ENCODE measurements at regions of chr20 and their contacts with region 1.

Region 1: DNA sequence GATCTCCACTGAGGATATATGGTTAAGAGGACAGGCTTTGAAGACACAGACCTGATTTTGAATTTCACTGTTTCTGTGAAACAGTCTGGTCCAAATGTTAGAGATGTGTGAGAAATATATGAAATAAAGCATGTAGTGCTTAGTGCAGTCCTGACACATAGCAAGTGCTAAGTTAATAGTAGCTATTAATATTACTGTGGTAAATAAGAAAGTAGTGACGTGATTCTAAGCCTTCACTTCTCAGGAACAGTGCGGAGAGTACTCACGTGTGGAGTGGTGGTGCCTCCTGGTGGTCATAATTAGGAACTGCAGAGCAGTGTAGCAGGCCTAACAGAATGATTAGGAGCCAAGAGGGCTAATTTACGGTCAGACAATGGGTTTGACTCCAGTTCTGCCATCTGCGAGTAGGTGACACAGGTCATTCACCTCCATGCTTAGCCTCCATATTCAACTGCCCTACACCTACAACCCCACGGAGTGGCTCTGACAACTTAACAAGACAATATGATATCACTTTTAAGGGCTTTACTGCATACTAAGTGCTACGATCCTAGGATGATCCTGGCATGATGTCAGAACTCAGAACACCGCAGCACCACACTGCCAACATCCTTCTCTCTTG is 106.2 kb downstream of the JPH2 start:
- DNase-seq: peak; percentile 83
- H3K4me3 ChIP-seq: no peak overlapping the region
- H3K27ac ChIP-seq: no peak overlapping the region
- H3K4me1 ChIP-seq: no peaks in the 10 kb centered on the region
- H3K27me3 ChIP-seq: no peaks in the 10 kb centered on the region
- CTCF ChIP-seq: peak; percentile 99

Region 2: DNA sequence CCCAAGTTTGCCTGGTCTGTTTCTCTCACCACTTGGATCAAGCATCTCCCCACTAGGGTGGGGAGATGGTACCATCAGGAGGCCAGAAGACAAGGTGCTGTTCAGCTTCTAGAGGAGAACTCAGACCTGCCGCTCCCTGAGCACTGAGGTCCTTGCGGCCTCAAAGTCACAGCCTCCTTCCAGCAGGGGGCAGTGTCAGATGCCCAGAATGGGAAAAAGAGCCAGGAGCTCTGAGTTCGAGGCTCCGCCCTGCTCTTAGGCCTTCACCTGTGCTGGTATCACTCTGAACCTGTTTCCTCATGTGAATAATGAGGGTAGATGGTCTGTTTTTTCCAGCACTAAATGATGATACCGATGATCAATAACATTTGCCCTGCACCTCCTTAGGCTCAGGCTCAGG is 97.4 kb before region 1 on chr20:
- intact Hi-C with region 1: loop called (anchors 5 kb)
- DNase-seq: peak; percentile 90
- H3K4me3 ChIP-seq: no peak overlapping the region
- H3K27ac ChIP-seq: peak overlapping the region; percentile 87
- H3K4me1 ChIP-seq: peaks cover 4% of the 10 kb centered on the region
- H3K27me3 ChIP-seq: no peaks in the 10 kb centered on the region
- CTCF ChIP-seq: peak; percentile 58

Region 3: GRCh38 chr20:44204155-44204831 is 123.5 kb after region 1 on chr20:
- intact Hi-C with region 1: no loop called
- DNase-seq: no peak
- H3K4me3 ChIP-seq: no peak overlapping the region
- H3K27ac ChIP-seq: no peak overlapping the region
- H3K4me1 ChIP-seq: no peaks in the 10 kb centered on the region
- H3K27me3 ChIP-seq: no peaks in the 10 kb centered on the region
- CTCF ChIP-seq: no peak

Region 4: DNA sequence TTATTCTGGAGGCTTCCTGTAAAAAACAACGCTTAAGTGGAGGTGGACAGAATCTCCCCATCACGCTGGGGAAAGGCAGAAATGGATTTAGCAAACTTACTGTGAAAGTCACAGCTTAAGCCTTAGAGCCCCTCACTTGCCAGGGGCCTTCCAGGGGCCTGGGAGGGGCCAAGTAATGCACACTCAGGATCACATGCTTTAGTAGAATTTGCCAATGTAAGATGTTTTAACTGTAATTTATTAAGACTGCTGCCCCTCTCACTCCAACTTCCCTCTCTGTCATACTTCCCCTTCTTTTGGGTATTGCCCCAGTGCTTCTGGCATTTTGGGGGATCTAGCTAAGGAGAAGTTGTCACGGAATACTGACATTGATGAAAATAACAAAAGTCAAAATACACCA is 583.4 kb after region 1 on chr20:
- intact Hi-C with region 1: no loop called
- DNase-seq: no peak
- H3K4me3 ChIP-seq: no peak overlapping the region
- H3K27ac ChIP-seq: no peak overlapping the region
- H3K4me1 ChIP-seq: no peaks in the 10 kb centered on the region
- H3K27me3 ChIP-seq: no peaks in the 10 kb centered on the region
- CTCF ChIP-seq: no peak